ENCODE measurements at regions of chr20 and their contacts with region 1.

Region 1: GRCh38 chr20:483813-484644 is 21.7 kb upstream of the TBC1D20 start:
- DNase-seq: no peak
- H3K4me3 ChIP-seq: no peak overlapping the region
- H3K4me3 Mint-ChIP-seq: no peak overlapping the region
- H3K27ac ChIP-seq: no peak overlapping the region
- H3K27ac Mint-ChIP-seq: no peak overlapping the region
- H3K4me1 ChIP-seq: no peaks in the 10 kb centered on the region
- H3K4me1 Mint-ChIP-seq: no peaks in the 10 kb centered on the region
- H3K27me3 ChIP-seq: no peaks in the 10 kb centered on the region
- H3K27me3 Mint-ChIP-seq: no peaks in the 10 kb centered on the region
- CTCF ChIP-seq: no peak

Region 2: DNA sequence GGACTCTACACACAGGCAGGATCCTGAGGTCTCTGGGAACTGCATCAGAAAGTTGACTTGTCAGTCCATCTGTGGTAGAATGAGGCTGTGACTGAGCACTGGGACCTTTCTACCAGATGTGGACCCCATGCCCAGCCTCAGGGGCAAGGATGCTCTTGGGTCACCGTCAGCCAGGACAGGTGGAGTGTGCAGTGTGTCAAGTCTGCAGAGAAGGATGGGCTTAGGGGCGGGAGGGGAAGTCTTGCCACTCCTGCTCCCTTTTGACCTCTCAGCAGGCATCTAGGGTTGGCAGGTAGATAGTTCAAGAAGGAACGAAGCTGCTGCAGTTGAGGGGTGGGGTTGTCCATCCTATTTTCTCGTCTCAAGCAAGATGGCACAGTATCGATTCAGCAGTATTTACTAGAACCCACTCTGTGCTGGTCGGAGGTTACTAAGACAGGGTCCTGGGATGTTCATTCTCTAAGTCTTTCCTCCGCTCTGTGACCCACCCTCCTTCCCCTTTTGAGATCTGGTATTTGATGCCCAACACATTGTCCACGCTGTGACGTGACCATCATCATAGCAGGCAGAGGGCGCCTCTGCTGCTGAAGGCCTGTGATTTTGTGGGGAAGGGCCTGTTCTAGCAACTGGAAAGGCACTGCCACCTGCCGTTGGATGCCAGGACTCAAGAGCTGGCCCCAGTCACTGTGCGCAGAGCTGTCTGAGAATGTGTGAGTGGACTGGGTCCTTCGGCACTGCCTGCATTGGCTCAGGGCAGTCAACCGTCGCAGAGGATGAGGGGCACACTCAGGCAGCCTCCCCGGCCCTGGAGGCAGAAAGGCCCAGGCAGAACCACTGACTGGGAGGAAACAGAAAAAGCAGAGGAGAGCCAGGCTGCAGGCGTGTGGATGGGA is 52.8 kb before region 1 on chr20:
- intact Hi-C with region 1: loop called in 1 of 2 experiments (anchors 10 kb)
- DNase-seq: peak; percentile 44 to 62 (median 54)
- H3K4me3 ChIP-seq: no peak overlapping the region
- H3K4me3 Mint-ChIP-seq: no peak overlapping the region
- H3K27ac ChIP-seq: no peak overlapping the region
- H3K27ac Mint-ChIP-seq: peak overlapping the region; percentile 1 to 80 (median 38)
- H3K4me1 ChIP-seq: no peaks in the 10 kb centered on the region
- H3K4me1 Mint-ChIP-seq: peaks cover 7% of the 10 kb centered on the region
- H3K27me3 ChIP-seq: no peaks in the 10 kb centered on the region
- H3K27me3 Mint-ChIP-seq: peaks cover 0 to 2% (median 2%) of the 10 kb centered on the region in 3 donors
- CTCF ChIP-seq: peak; percentile 25

Region 3: GRCh38 chr20:610130-611046 is 126.4 kb after region 1 on chr20 and contains the start of gene TCF15:
- intact Hi-C with region 1: no loop called
- DNase-seq: peak in 1 of 3 donors; percentile 11
- H3K4me3 ChIP-seq: no peak within 1 kb of the TSS
- H3K4me3 Mint-ChIP-seq: peak within 1 kb of the TSS in 1 of 2 donors; percentile 80
- H3K27ac ChIP-seq: no peak within 1 kb of the TSS
- H3K27ac Mint-ChIP-seq: peak within 1 kb of the TSS in 1 of 7 donors; percentile 11
- H3K4me1 ChIP-seq: peaks cover 7 to 10% of the 10 kb centered on the region in 2 donors
- H3K4me1 Mint-ChIP-seq: peaks cover 21% of the 10 kb centered on the region
- H3K27me3 ChIP-seq: peaks cover 29 to 49% of the 10 kb centered on the region in 2 donors
- H3K27me3 Mint-ChIP-seq: peaks cover 46 to 59% (median 49%) of the 10 kb centered on the region in 3 donors
- CTCF ChIP-seq: no peak
- polyA plus RNA-seq, gene TCF15: not detected

Measured in CD14-positive monocyte (primary cell).